ENCODE measurements at regions of chr19 and their contacts with region 1.

Region 1: GRCh38 chr19:38849860-38850435 is at the start of gene HNRNPL:
- DNase-seq: no peak
- H3K4me3 ChIP-seq: peak within 1 kb of the TSS; percentile 58 to 84 (median 78)
- H3K27ac ChIP-seq: peak within 1 kb of the TSS; percentile 86
- H3K4me1 ChIP-seq: peaks cover 34% of the 10 kb centered on the region
- H3K27me3 ChIP-seq: no peaks in the 10 kb centered on the region
- CTCF ChIP-seq: peak; percentile 28 to 70
- POLR2A ChIP-seq: peak; percentile 78
- total RNA-seq, gene HNRNPL: 427 and 451 TPM in 2 replicates

Region 2: DNA sequence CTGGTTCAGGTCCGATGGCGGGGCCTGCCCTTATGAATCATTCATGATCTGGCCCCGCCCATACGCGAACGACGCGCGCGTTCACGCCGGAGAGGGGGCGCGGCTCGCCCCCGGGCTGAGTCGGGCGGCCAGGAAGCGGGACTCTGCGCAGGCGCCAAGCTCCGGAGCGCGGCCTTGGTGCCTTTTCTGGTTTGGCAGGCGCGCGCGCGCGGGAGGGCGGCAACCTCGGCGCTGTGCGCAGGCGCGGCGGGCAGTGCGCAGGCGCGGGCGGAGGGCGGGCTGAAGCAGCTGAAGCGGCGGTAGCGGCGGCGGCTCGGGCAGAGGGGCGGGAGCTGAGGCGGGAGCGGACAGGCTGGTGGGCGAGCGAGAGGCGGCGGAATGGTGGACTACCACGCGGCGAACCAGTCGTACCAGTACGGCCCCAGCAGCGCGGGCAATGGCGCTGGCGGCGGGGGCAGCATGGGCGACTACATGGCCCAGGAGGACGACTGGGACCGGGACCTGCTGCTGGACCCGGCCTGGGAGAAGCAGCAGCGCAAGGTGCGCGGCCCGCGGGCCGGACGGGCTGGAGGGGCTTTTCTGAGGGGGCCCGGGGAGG is 202.5 kb before region 1 on chr19 and contains the start of gene ACTN4:
- CTCF ChIA-PET with region 1: no interaction called
- POLR2A ChIA-PET with region 1: interaction called, 4 read pairs
- dilution Hi-C with region 1: no loop called
- intact Hi-C with region 1: loop called (anchors 10 kb)
- DNase-seq: peak; percentile 98
- H3K4me3 ChIP-seq: peak within 1 kb of the TSS; percentile 96 to 99 (median 98)
- H3K27ac ChIP-seq: peak within 1 kb of the TSS; percentile 70
- H3K4me1 ChIP-seq: peaks cover 28% of the 10 kb centered on the region
- H3K27me3 ChIP-seq: no peaks in the 10 kb centered on the region
- CTCF ChIP-seq: no peak
- POLR2A ChIP-seq: peak; percentile 97
- total RNA-seq, gene ACTN4: 693 and 748 TPM in 2 replicates

Region 3: DNA sequence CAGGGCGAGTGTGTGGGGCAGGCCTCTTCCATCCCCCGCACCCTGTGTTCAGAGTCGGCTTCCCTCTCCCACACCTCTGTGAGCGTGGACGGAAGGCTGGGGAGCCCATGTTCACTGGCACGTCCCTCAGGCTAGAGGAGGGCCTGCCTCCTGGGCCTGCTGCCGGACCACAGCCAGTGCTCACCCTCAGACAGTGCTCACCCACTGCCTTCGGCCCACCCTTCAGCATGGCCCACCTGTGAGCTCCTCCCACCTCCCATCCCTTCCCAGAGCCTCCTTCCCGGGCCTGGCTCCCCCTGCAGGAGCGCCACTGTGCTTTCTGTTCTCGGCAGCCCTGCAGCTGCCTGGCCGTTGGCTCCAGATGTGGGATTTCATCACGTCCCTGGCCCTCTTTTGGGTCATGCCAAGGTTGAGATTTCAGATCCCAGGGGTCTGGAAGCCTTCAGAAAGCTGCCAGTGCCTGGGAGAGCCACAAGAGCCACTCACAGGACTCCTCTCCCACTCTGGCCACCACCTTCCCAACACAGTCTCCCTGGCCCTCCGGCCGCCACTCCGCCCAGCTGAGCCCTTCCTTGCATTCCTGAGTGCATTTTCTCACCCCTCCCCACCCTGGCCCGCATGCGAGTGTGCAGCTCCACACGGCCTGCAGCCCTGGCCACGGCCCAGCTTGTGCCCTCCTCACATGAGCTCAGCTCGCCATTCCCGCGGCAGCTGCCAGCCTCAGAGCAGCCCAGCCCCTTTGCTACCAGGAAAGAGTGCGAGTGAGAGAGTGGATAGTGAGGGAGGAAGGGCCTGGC is 131.0 kb before region 1 on chr19:
- CTCF ChIA-PET with region 1: no interaction called
- POLR2A ChIA-PET with region 1: no interaction called
- dilution Hi-C with region 1: no loop called
- intact Hi-C with region 1: no loop called
- DNase-seq: no peak
- H3K4me3 ChIP-seq: no peak overlapping the region
- H3K27ac ChIP-seq: no peak overlapping the region
- H3K4me1 ChIP-seq: no peaks in the 10 kb centered on the region
- H3K27me3 ChIP-seq: no peaks in the 10 kb centered on the region
- CTCF ChIP-seq: peak; percentile 14 to 17
- POLR2A ChIP-seq: no peak

Region 4: DNA sequence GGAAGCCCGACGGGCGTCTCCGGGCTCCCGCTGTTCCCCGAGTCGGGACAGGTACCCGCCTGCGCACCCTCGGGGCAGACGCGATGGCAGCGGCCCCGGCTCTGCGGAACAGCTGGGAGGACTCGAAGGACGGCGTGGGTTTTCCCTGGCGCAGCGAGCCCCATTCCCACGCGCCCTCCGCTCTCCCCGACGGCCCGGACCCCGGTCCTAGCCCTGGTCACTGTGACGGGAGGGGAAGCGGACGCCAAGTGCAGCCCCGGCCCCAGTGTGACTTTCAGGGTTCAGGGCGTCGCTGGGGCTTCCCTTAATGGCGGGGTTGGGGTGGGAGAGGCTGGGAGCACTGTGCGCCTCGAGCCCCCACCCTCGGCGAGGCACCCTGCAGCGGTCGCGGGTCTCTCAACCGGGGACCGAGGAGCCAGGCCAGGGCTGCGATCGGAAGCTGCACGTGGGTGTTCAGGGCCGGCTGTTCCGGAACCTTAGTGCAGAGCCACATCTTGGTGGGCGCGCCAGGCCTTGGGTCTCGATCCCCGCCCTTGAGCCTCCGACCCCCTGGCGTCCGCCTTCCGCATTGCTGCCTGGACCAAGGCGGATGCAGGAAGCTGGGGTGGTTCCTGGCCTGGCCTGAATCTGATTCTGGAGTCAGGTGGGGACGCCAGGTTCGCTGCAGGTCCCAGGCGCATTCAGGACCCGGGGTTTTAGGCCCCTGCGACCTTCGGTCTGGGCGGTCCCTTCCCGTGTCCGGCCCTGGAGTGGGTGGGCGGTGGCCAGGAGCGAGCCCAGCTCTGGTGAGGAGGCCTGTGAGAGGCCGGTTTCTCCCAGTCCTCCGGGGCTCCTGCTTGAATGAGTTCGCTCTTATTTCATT is 57.5 kb before region 1 on chr19:
- CTCF ChIA-PET with region 1: no interaction called
- POLR2A ChIA-PET with region 1: no interaction called
- dilution Hi-C with region 1: no loop called
- intact Hi-C with region 1: no loop called
- DNase-seq: no peak
- H3K4me3 ChIP-seq: no peak overlapping the region
- H3K27ac ChIP-seq: no peak overlapping the region
- H3K4me1 ChIP-seq: peaks cover 9% of the 10 kb centered on the region
- H3K27me3 ChIP-seq: no peaks in the 10 kb centered on the region
- CTCF ChIP-seq: peak; percentile 26 to 32
- POLR2A ChIP-seq: no peak

Region 5: GRCh38 chr19:38831142-38831605 is 18.8 kb before region 1 on chr19:
- CTCF ChIA-PET with region 1: interaction called, 3 read pairs
- POLR2A ChIA-PET with region 1: interaction called, 5 read pairs
- dilution Hi-C with region 1: no loop called
- intact Hi-C with region 1: loop called (anchors 1 kb)
- DNase-seq: peak; percentile 64
- H3K4me3 ChIP-seq: peak overlapping the region; percentile 3 to 78 (median 67)
- H3K27ac ChIP-seq: peak overlapping the region; percentile 78
- H3K4me1 ChIP-seq: peaks cover 13% of the 10 kb centered on the region
- H3K27me3 ChIP-seq: no peaks in the 10 kb centered on the region
- CTCF ChIP-seq: no peak
- POLR2A ChIP-seq: no peak

Region 6: GRCh38 chr19:38869856-38870607 is 20.1 kb after region 1 on chr19:
- CTCF ChIA-PET with region 1: interaction called, 13 read pairs
- POLR2A ChIA-PET with region 1: no interaction called
- dilution Hi-C with region 1: no loop called
- intact Hi-C with region 1: loop called (anchors 1 kb)
- DNase-seq: peak; percentile 61
- H3K4me3 ChIP-seq: peak overlapping the region; percentile 3 to 40 (median 33)
- H3K27ac ChIP-seq: no peak overlapping the region
- H3K4me1 ChIP-seq: peaks cover 9% of the 10 kb centered on the region
- H3K27me3 ChIP-seq: no peaks in the 10 kb centered on the region
- CTCF ChIP-seq: peak; percentile 75 to 84
- POLR2A ChIP-seq: no peak

Region 7: GRCh38 chr19:38899447-38900219 is 49.7 kb after region 1 on chr19 and contains the starts of genes NFKBIB and SIRT2:
- CTCF ChIA-PET with region 1: interaction called, 3 read pairs
- POLR2A ChIA-PET with region 1: interaction called, 3 read pairs
- dilution Hi-C with region 1: no loop called
- intact Hi-C with region 1: loop called (anchors 1 kb)
- DNase-seq: peak; percentile 100
- H3K4me3 ChIP-seq: peak within 1 kb of the TSS; percentile 73 to 83 (median 82)
- H3K27ac ChIP-seq: peak within 1 kb of the TSS; percentile 86
- H3K4me1 ChIP-seq: peaks cover 22% of the 10 kb centered on the region
- H3K27me3 ChIP-seq: no peaks in the 10 kb centered on the region
- CTCF ChIP-seq: no peak
- POLR2A ChIP-seq: peak; percentile 43
- total RNA-seq, gene NFKBIB: 24.3 and 25.0 TPM in 2 replicates
- total RNA-seq, gene SIRT2: 46.3 and 47.6 TPM in 2 replicates

Region 8: GRCh38 chr19:38989066-38989605 is 139.2 kb after region 1 on chr19:
- CTCF ChIA-PET with region 1: no interaction called
- POLR2A ChIA-PET with region 1: no interaction called
- dilution Hi-C with region 1: no loop called
- intact Hi-C with region 1: no loop called
- DNase-seq: no peak
- H3K4me3 ChIP-seq: no peak overlapping the region
- H3K27ac ChIP-seq: no peak overlapping the region
- H3K4me1 ChIP-seq: peaks cover 10% of the 10 kb centered on the region
- H3K27me3 ChIP-seq: peaks cover 0 to 2% of the 10 kb centered on the region in 2 experiments
- CTCF ChIP-seq: no peak
- POLR2A ChIP-seq: no peak

Measured in endothelial cell of umbilical vein (primary cell).